HEK293T (cell line): ENCODE measurements at regions of chr13 and their contacts with region 1.

Region 1: GRCh38 chr13:32315238-32316027 is at the starts of genes BRCA2 and ZAR1L:
- DNase-seq: peak; percentile 82

Region 2: GRCh38 chr13:32164622-32165268 is 150.7 kb before region 1 on chr13:
- CTCF ChIA-PET with region 1: no interaction called
- POLR2A ChIA-PET with region 1: interaction called, 11 read pairs
- DNase-seq: peak; percentile 77

Region 3: DNA sequence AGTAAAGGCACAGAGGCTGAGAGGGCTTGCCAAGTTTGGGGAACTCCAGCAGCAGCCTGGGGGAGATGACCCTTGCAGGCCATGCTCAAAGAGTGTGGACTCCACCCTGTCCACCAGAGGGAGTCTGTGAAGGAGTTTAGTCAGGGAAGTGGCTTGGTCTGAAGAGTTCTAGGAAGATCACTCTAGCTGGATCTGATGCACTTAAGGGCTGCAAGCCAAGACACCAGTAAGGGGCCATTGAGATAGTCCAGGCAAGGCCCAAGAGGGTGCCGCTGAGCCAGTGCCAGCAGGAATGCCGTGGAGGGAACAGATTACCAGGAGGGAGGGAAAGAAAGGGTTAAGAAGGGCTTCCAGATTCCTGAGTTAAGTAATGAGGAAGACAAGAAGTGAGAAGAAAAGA is 69.0 kb before region 1 on chr13:
- CTCF ChIA-PET with region 1: interaction called, 4 read pairs
- POLR2A ChIA-PET with region 1: interaction called, 23 read pairs
- DNase-seq: peak; percentile 78

Region 4: DNA sequence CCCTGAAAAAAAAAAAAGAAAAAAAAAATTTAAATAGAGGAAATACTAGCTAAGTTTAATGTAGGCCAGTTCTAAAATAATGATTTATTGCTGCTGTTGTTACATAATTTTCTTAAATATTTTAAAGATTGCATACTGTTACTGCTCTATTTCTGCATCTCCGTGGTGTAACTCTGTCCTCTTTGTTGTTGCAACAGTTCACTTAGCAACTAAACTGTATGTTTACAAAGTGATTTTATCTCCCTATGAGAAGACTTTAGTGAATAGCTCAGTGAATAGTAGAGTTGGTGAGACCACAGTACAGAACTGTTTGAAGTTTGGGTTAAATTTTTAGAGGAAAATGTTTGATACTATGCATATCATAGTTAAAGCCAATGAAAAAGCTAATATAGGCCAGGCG is 19.2 kb after region 1 on chr13:
- CTCF ChIA-PET with region 1: interaction called, 3 read pairs
- POLR2A ChIA-PET with region 1: interaction called, 10 read pairs
- DNase-seq: no peak

Region 5: GRCh38 chr13:32474999-32475792 is 159.8 kb after region 1 on chr13:
- CTCF ChIA-PET with region 1: no interaction called
- POLR2A ChIA-PET with region 1: no interaction called
- DNase-seq: no peak